ENCODE measurements at regions of chr11 and their contacts with region 1.

Region 1: DNA sequence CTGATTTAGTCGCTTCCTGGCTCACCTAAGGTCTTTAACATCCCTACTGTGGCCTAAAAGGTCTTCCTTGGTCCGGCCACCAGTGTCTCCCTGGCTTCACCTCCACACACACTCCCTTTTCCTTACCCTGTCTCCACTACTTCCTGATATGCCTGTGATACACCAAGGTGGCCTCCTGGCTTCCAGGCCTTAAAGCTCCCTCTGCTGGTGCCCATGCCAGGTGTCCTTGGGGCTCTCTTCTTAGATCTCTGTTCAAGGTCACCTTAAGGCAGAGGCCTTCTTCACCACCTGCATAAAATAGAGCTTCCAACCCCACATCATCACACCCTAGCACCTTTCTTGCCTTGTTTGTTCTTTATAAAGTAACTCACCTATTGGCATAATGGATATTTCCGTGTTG is 787.7 kb downstream of the NTM start:
- DNase-seq: peak; percentile 6
- H3K4me3 Mint-ChIP-seq: no peak overlapping the region
- H3K27ac Mint-ChIP-seq: no peak overlapping the region
- H3K4me1 Mint-ChIP-seq: no peaks in the 10 kb centered on the region
- H3K27me3 Mint-ChIP-seq: no peaks in the 10 kb centered on the region

Region 2: GRCh38 chr11:131694526-131695424 is 463.3 kb before region 1 on chr11:
- CTCF ChIA-PET with region 1: no interaction called
- intact Hi-C with region 1: loop called (anchors 1 kb)
- DNase-seq: peak; percentile 75
- H3K4me3 Mint-ChIP-seq: no peak overlapping the region
- H3K27ac Mint-ChIP-seq: no peak overlapping the region
- H3K4me1 Mint-ChIP-seq: no peaks in the 10 kb centered on the region
- H3K27me3 Mint-ChIP-seq: peaks cover 42% of the 10 kb centered on the region

Region 3: GRCh38 chr11:131748151-131749050 is 409.7 kb before region 1 on chr11:
- CTCF ChIA-PET with region 1: no interaction called
- intact Hi-C with region 1: loop called (anchors 10 kb)
- DNase-seq: peak; percentile 58
- H3K4me3 Mint-ChIP-seq: no peak overlapping the region
- H3K27ac Mint-ChIP-seq: no peak overlapping the region
- H3K4me1 Mint-ChIP-seq: no peaks in the 10 kb centered on the region
- H3K27me3 Mint-ChIP-seq: peaks cover 2% of the 10 kb centered on the region

Measured in activated naive CD4-positive, alpha-beta T cell treated with anti-CD3 and anti-CD28 coated beads for 36 hours (primary cell).